ENCODE measurements at regions of chr1 and their contacts with region 1.

Region 1: GRCh38 chr1:205321164-205321958 is at the start of gene NUAK2:
- DNase-seq: peak; percentile 85
- ATAC-seq: peak; percentile 76
- H3K4me3 Mint-ChIP-seq: peak within 1 kb of the TSS; percentile 78
- H3K27ac Mint-ChIP-seq: peak within 1 kb of the TSS; percentile 82
- H3K4me1 Mint-ChIP-seq: peaks cover 56% of the 10 kb centered on the region
- H3K27me3 Mint-ChIP-seq: no peaks in the 10 kb centered on the region
- CTCF ChIP-seq: peak; percentile 34
- total RNA-seq, gene NUAK2: 1.9 TPM

Region 2: DNA sequence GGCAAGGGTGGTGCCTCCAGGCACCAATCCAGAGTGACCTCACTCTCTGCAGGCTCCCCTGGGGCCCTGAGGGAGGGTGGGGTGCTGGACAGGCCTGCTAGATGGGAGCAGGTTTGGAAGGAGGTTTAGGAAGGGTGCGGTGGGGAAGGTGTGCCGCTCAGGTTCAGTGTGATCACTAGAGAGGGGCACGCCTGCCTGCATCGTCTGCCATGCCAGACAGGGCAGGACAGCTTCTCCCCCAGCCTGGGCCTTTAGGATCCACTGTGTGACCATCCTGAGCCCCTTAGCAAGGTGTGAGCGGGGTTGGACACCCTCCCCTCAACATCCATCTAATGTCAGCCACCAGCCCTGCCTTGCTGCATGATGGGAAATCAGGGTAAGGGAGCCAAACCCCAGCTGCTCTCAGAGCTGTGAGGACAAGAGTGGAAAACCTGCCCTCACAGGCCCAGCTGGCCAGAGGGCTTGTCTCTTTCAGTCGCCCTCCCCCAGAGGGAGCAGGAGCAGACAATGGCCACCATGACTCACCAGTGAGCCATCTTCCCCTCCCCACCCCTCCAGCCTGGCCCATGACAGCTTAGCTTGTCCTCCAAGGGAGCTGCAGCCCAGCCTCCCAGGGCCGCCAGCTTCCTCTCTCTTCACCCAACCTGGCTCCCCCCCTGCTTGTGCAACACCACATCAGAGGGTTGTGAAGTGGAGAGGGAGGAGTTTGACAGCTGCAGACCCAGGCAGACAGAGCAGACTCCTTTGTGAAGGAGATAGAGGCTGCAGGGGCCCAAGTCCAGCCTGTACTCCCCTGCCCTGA is 36.8 kb before region 1 on chr1:
- CTCF ChIA-PET with region 1: interaction called, 1,285 read pairs
- POLR2A ChIA-PET with region 1: interaction called, 158 read pairs
- intact Hi-C with region 1: loop called (anchors 2 kb)
- DNase-seq: peak; percentile 96
- ATAC-seq: peak; percentile 75
- H3K4me3 Mint-ChIP-seq: peak overlapping the region; percentile 57
- H3K27ac Mint-ChIP-seq: peak overlapping the region; percentile 66
- H3K4me1 Mint-ChIP-seq: peaks cover 74% of the 10 kb centered on the region
- H3K27me3 Mint-ChIP-seq: no peaks in the 10 kb centered on the region
- CTCF ChIP-seq: no peak

Region 3: GRCh38 chr1:205382561-205382960 is 61.2 kb after region 1 on chr1:
- CTCF ChIA-PET with region 1: no interaction called
- POLR2A ChIA-PET with region 1: no interaction called
- intact Hi-C with region 1: no loop called
- DNase-seq: no peak
- ATAC-seq: no peak
- H3K4me3 Mint-ChIP-seq: no peak overlapping the region
- H3K27ac Mint-ChIP-seq: no peak overlapping the region
- H3K4me1 Mint-ChIP-seq: no peaks in the 10 kb centered on the region
- H3K27me3 Mint-ChIP-seq: peaks cover 11% of the 10 kb centered on the region
- CTCF ChIP-seq: no peak

Region 4: GRCh38 chr1:205438213-205439157 is 117.1 kb after region 1 on chr1:
- CTCF ChIA-PET with region 1: no interaction called
- POLR2A ChIA-PET with region 1: no interaction called
- intact Hi-C with region 1: no loop called
- DNase-seq: no peak
- ATAC-seq: no peak
- H3K4me3 Mint-ChIP-seq: no peak overlapping the region
- H3K27ac Mint-ChIP-seq: no peak overlapping the region
- H3K4me1 Mint-ChIP-seq: peaks cover 22% of the 10 kb centered on the region
- H3K27me3 Mint-ChIP-seq: peaks cover 1% of the 10 kb centered on the region
- CTCF ChIP-seq: no peak